ENCODE measurements at regions of chr17 and their contacts with region 1.

Region 1: GRCh38 chr17:50883850-50884438 is 17.8 kb upstream of the TOB1 start:
- DNase-seq: no peak
- ATAC-seq: no peak
- H3K4me3 Mint-ChIP-seq: no peak overlapping the region
- H3K27ac Mint-ChIP-seq: no peak overlapping the region
- H3K4me1 Mint-ChIP-seq: peaks cover 21% of the 10 kb centered on the region
- H3K27me3 Mint-ChIP-seq: peaks cover 8% of the 10 kb centered on the region

Region 2: DNA sequence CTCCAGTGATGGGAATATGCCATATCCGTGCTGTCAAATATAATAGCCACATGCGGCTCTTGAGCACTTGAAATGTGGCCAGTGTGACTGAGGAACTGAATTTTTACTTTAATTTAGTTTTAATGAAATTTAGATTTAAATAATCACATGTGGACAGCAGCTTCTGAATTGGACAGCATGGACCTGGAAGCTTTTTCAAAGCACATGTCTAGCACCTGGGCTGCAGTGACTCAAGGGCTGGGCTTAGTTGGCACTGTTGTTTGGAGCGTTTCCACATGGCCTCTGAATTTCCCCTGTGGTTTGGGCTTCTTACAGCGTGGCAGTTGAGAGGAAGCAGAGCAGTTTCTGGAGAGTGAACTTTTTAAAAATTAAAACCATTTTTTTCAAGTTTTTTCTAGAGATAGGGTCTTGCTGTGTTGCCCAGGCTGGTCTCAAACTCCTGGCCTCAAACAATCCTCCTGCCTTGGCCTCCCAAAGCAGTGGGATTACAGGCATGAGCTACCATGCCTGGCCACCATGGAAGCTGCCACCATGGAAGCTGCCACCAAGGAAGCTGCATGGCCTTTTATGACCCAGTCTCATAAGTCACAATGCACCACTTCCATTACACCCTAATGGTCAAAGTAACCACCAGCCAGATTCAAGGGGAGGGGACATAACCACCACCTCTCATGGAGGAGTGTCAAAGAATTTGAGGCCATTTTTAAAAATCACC is 11.1 kb before region 1 on chr17:
- CTCF ChIA-PET with region 1: interaction called, 11 read pairs
- DNase-seq: peak; percentile 70
- ATAC-seq: no peak
- H3K4me3 Mint-ChIP-seq: no peak overlapping the region
- H3K27ac Mint-ChIP-seq: no peak overlapping the region
- H3K4me1 Mint-ChIP-seq: peaks cover 42% of the 10 kb centered on the region
- H3K27me3 Mint-ChIP-seq: peaks cover 51% of the 10 kb centered on the region